ENCODE measurements at regions of chr4 and their contacts with region 1.

Region 1: DNA sequence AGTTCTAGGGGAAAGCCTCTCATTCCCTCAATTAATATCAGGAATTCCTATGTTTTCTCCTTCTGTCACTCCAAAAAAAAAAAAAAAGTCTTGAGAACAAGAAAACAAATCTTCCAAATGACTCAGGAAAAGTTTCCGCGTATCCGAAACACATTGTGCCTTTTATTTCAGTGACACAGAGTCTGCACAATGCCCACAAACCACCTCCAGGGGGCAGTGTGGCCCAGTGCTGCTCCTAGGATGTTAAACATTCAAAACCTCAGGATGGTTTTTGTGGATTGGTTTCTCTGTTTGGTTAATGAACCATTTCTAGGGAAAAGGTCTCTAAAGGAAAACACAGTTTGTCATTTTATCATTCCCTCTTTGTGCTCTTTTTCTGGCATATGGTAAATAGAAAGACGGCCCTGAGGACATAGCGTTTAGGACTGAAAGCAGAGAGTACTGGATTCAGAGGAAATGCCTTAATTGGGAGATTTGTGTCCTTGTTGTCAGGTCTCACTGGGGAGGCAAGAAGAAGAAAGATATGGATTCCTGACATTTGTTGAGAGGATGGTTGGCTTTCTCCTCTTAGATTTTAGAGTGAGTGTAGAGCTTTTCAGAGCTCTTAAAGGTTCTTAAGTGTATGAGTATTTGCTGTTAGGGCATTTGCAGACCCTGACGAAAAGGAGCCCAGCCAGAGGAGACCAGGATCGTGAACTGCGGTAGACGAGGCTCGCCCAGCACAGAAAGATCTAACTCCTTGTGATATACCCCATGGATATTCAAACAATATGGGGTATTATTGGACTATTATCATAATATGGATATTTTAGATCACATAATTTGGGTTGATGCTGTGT is 65.7 kb upstream of the MAP9 start:
- DNase-seq: peak; percentile 93
- H3K4me3 ChIP-seq: peak overlapping the region in 1 of 3 experiments; percentile 53
- H3K27ac ChIP-seq: no peak overlapping the region
- H3K4me1 ChIP-seq: peaks cover 3% of the 10 kb centered on the region
- H3K27me3 ChIP-seq: peaks cover 0 to 3% of the 10 kb centered on the region in 2 experiments
- CTCF ChIP-seq: peak; percentile 88 to 94
- POLR2A ChIP-seq: no peak

Region 2: DNA sequence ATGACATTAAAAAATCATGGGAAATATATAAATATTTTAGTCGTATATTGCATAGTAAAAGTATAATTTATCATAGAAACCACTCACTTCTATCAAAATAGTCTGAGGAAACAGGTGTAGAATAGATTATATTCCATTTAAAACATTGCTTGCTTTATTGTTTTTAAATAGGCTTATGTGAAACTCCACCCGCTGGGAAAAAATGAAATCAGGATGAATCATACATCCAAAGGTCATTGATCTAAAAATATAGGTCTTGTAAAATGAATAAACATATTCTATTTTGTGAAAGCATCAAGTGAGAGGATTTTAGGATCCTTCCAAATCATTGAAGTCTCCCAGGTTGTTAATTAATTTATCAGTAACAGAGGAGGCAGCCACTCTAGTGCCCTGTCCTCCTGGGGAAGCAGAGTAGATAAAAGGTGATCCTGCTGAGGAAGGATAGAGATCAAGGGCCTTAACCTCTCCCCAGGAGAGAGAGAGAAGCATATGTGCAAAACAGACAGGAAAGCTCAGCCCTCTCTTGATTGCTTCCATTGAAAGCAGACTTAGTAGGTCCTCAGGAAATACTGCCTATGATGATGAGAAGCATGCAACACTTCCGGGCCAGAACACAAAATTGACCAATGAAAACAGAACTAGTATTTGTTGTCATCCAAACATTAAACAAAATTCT is 31.1 kb after region 1 on chr4:
- CTCF ChIA-PET with region 1: no interaction called
- POLR2A ChIA-PET with region 1: no interaction called
- dilution Hi-C with region 1: no loop called
- intact Hi-C with region 1: loop called (anchors 2 kb)
- DNase-seq: peak; percentile 93
- H3K4me3 ChIP-seq: no peak overlapping the region
- H3K27ac ChIP-seq: peak overlapping the region; percentile 13
- H3K4me1 ChIP-seq: peaks cover 16% of the 10 kb centered on the region
- H3K27me3 ChIP-seq: no peaks in the 10 kb centered on the region
- CTCF ChIP-seq: no peak
- POLR2A ChIP-seq: no peak

Region 3: DNA sequence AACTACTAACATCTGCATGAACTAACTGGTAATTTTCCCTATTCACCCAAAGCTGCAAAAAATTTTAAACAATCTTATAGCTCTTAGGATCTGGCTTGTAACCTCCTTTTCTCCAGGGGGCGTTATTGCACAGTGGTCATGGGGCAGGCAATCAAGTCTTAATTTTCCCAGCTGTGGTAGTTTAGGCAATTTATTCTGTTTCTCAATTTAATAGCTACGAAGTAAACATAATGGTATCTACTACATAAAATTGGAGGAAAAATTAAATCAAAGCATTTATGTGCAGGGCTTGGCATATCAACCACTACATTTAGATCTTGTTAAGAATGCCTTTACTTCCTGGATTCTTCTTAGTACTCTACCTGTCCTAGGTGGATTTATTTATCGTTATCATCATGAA is 86.8 kb after region 1 on chr4:
- CTCF ChIA-PET with region 1: interaction called, 6 read pairs
- POLR2A ChIA-PET with region 1: no interaction called
- dilution Hi-C with region 1: no loop called
- intact Hi-C with region 1: loop called (anchors 1 kb)
- DNase-seq: peak; percentile 74
- H3K4me3 ChIP-seq: no peak overlapping the region
- H3K27ac ChIP-seq: no peak overlapping the region
- H3K4me1 ChIP-seq: peaks cover 13% of the 10 kb centered on the region
- H3K27me3 ChIP-seq: no peaks in the 10 kb centered on the region
- CTCF ChIP-seq: peak; percentile 29 to 43
- POLR2A ChIP-seq: no peak

Region 4: GRCh38 chr4:155629183-155629825 is 186.8 kb after region 1 on chr4:
- CTCF ChIA-PET with region 1: no interaction called
- POLR2A ChIA-PET with region 1: no interaction called
- dilution Hi-C with region 1: no loop called
- intact Hi-C with region 1: loop called (anchors 1 kb)
- DNase-seq: peak; percentile 93
- H3K4me3 ChIP-seq: no peak overlapping the region
- H3K27ac ChIP-seq: peak overlapping the region; percentile 11
- H3K4me1 ChIP-seq: peaks cover 15% of the 10 kb centered on the region
- H3K27me3 ChIP-seq: no peaks in the 10 kb centered on the region
- CTCF ChIP-seq: no peak
- POLR2A ChIP-seq: no peak

Region 5: GRCh38 chr4:155758481-155759404 is 316.3 kb after region 1 on chr4 and contains the start of gene GUCY1B1:
- CTCF ChIA-PET with region 1: interaction called, 6 read pairs
- POLR2A ChIA-PET with region 1: no interaction called
- dilution Hi-C with region 1: no loop called
- intact Hi-C with region 1: loop called (anchors 1 kb)
- DNase-seq: peak; percentile 95
- H3K4me3 ChIP-seq: peak within 1 kb of the TSS; percentile 32 to 53 (median 44)
- H3K27ac ChIP-seq: no peak within 1 kb of the TSS
- H3K4me1 ChIP-seq: peaks cover 6% of the 10 kb centered on the region
- H3K27me3 ChIP-seq: no peaks in the 10 kb centered on the region
- CTCF ChIP-seq: peak; percentile 30 to 62
- POLR2A ChIP-seq: no peak
- total RNA-seq, gene GUCY1B1: 4.7 and 7.0 TPM in 2 replicates

Region 6: GRCh38 chr4:155953151-155954114 is 510.9 kb after region 1 on chr4 and contains the start of gene CTSO:
- CTCF ChIA-PET with region 1: interaction called, 12 read pairs
- POLR2A ChIA-PET with region 1: no interaction called
- dilution Hi-C with region 1: no loop called
- intact Hi-C with region 1: loop called (anchors 1 kb)
- DNase-seq: peak; percentile 88
- H3K4me3 ChIP-seq: peak within 1 kb of the TSS; percentile 54 to 86 (median 79)
- H3K27ac ChIP-seq: peak within 1 kb of the TSS; percentile 92
- H3K4me1 ChIP-seq: peaks cover 6% of the 10 kb centered on the region
- H3K27me3 ChIP-seq: no peaks in the 10 kb centered on the region
- CTCF ChIP-seq: peak in 1 of 2 donors; percentile 58
- POLR2A ChIP-seq: peak; percentile 83
- total RNA-seq, gene CTSO: 6.7 and 7.9 TPM in 2 replicates